Calu3 (cell line): ENCODE measurements at regions of chr13 and their contacts with region 1.

Region 1: GRCh38 chr13:31236211-31236786 is 36.5 kb downstream of the B3GLCT start:
- DNase-seq: no peak
- H3K4me3 Mint-ChIP-seq: no peak overlapping the region
- H3K27ac Mint-ChIP-seq: no peak overlapping the region
- H3K4me1 Mint-ChIP-seq: no peaks in the 10 kb centered on the region
- H3K27me3 Mint-ChIP-seq: no peaks in the 10 kb centered on the region
- CTCF ChIP-seq: no peak

Region 2: DNA sequence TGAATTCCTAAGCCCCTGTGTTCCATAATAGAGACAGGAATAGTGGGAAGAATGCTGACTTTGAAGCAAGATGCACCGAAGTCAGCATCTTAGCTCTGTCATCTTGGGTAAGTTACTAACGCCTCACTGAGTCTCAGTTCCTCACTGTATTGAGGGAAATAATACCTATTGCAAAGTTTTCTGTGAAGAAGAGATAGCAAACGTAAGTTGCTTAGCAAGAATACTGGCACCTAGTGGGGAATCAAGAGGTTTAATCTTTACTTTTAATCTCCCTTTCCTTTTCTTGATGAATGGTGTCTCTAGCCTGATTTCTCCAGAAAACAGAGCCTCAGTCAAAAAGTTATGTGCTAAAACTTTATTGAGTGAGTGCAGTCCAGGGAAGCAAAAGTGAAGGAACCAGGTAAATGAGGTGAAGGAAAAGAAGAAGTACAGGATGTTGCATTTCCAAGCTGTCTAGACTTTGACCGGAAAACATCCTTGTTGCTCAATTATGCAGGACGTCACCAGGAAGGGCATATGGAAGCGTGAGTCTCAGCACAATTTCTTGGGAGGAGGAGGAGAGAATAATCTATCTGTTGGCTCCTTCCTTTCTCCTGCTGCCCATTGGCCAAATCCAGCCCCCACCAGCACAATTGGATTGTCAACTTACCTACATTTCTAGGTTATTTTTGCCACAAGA is 173.5 kb after region 1 on chr13:
- CTCF ChIA-PET with region 1: no interaction called
- intact Hi-C with region 1: loop called (anchors 1 kb)
- DNase-seq: no peak
- H3K4me3 Mint-ChIP-seq: no peak overlapping the region
- H3K27ac Mint-ChIP-seq: no peak overlapping the region
- H3K4me1 Mint-ChIP-seq: no peaks in the 10 kb centered on the region
- H3K27me3 Mint-ChIP-seq: peaks cover 13% of the 10 kb centered on the region
- CTCF ChIP-seq: no peak

Region 3: GRCh38 chr13:31424117-31424729 is 187.9 kb after region 1 on chr13:
- CTCF ChIA-PET with region 1: interaction called, 10 read pairs
- intact Hi-C with region 1: loop called (anchors 1 kb)
- DNase-seq: peak; percentile 70
- H3K4me3 Mint-ChIP-seq: no peak overlapping the region
- H3K27ac Mint-ChIP-seq: no peak overlapping the region
- H3K4me1 Mint-ChIP-seq: no peaks in the 10 kb centered on the region
- H3K27me3 Mint-ChIP-seq: peaks cover 32% of the 10 kb centered on the region
- CTCF ChIP-seq: peak; percentile 52